ENCODE measurements at regions of chr2 and their contacts with region 1.

Region 1: DNA sequence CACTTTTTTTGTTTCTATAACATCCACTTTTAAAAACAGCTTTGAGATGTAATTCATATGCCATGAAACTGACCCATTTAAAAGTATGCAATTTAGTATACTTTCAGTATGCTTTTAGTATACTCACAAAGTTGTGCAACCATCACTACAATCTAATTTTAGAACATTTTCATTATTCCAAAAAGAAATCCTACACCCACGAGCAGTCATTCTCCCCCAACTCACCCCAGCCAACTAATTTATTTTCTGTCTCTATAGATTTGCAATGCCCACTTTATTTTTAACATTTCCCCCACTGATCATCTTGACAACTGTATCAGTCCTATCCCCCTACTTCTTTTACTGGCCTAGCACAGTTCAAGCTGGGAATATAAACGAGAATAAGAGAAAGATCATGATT is 39.1 kb downstream of the FAM98A start:
- DNase-seq: peak in 1 of 4 donors; percentile 8
- ATAC-seq: no peak
- H3K4me3 ChIP-seq: no peak overlapping the region
- H3K27ac ChIP-seq: no peak overlapping the region
- H3K4me1 ChIP-seq: peaks cover 0 to 7% of the 10 kb centered on the region in 2 donors
- H3K27me3 ChIP-seq: no peaks in the 10 kb centered on the region
- CTCF ChIP-seq: no peak

Region 2: GRCh38 chr2:33312355-33312754 is 247.7 kb before region 1 on chr2:
- intact Hi-C with region 1: no loop called
- DNase-seq: no peak
- ATAC-seq: no peak
- H3K4me3 ChIP-seq: no peak overlapping the region
- H3K27ac ChIP-seq: no peak overlapping the region
- H3K4me1 ChIP-seq: no peaks in the 10 kb centered on the region
- H3K27me3 ChIP-seq: no peaks in the 10 kb centered on the region
- CTCF ChIP-seq: no peak

Region 3: GRCh38 chr2:33467413-33467812 is 92.6 kb before region 1 on chr2:
- intact Hi-C with region 1: no loop called
- DNase-seq: no peak
- ATAC-seq: no peak
- H3K4me3 ChIP-seq: no peak overlapping the region
- H3K27ac ChIP-seq: no peak overlapping the region
- H3K4me1 ChIP-seq: no peaks in the 10 kb centered on the region
- H3K27me3 ChIP-seq: no peaks in the 10 kb centered on the region
- CTCF ChIP-seq: no peak

Region 4: DNA sequence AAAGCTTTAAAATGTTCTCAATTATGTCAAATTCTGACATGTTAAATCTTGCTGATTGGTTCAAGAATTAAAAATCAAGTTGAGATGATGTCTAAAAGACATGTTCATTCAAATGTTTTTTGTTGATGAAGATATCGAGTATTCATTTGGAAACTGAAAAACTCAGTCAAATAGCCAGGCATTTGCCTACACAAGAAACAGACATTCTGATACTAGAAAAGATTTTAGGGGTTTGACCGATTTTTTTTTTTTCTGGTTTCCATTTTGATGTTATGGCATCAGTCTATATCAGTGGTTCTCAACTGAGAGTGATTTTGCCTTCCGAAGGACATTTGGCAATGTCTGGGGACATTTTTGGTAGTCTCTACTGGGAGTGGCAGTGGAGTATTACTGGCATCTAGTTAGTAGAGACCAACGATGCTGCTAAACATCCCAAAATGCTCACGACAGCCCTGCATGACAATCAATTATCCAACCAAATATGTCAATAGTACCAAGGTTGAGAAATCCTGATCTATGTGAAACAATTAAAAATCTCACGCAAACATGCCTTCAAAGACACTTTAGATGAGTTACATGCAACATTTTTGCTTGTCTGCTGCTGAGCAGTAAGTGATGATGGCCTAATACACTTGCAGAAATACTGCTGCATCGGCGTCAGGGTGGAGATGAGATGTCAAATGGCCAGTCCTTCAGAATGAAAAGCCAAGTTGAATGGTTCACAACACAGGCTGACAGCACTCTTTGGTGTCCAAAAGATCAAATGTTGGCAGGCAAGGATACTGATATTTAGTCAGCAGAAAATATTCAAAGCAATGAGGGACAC is 71.1 kb before region 1 on chr2:
- intact Hi-C with region 1: loop called in 1 of 2 experiments (anchors 10 kb)
- DNase-seq: no peak
- ATAC-seq: no peak
- H3K4me3 ChIP-seq: no peak overlapping the region
- H3K27ac ChIP-seq: no peak overlapping the region
- H3K4me1 ChIP-seq: peaks cover 0 to 3% of the 10 kb centered on the region in 2 donors
- H3K27me3 ChIP-seq: no peaks in the 10 kb centered on the region
- CTCF ChIP-seq: no peak

Measured in left lung (tissue), 14 donors.